ENCODE measurements at regions of chr3 and their contacts with region 1.

Region 1: GRCh38 chr3:38521391-38521987 is 25.3 kb downstream of the EXOG start:
- DNase-seq: no peak
- ATAC-seq: peak; percentile 72
- H3K4me3 Mint-ChIP-seq: no peak overlapping the region
- H3K27ac Mint-ChIP-seq: no peak overlapping the region
- H3K4me1 Mint-ChIP-seq: peaks cover 13% of the 10 kb centered on the region
- H3K27me3 Mint-ChIP-seq: no peaks in the 10 kb centered on the region
- CTCF ChIP-seq: peak; percentile 80

Region 2: DNA sequence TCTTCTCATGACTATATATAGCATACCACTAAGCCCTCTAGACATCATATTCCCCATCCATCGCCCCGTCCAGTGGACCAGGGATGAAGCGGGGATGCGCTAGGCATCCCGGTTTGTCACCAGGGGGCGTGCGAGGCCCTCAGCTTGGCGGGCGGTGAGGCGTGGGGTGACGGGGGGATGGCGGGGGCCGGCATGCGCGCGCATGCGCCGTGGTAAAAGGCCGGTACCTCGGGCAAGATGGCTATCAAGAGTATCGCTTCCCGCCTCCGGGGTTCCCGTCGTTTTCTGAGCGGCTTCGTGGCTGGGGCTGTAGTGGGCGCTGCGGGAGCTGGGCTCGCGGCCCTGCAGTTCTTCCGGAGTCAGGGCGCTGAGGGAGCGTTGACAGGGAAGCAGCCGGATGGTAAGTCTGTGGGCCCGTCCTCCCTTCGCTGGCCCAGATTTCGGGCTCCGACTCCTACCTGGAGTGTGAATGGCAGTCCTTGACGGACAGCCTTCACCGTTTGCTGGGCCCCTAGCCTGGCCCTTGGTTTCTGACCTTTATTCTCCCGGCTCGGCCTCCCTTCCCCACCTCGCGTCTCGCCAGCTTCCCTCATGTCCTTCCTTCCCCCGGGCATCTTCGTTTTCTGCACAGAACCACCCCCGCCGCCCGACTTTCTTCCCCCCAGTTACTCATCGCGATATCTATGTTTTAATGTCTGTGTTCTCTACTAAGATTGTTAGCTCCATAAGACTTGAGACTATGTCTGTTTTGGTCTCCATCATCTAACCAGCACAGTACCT is 25.2 kb before region 1 on chr3 and contains the start of gene EXOG:
- CTCF ChIA-PET with region 1: interaction called, 12 read pairs
- POLR2A ChIA-PET with region 1: no interaction called
- intact Hi-C with region 1: no loop called
- DNase-seq: peak; percentile 88
- ATAC-seq: peak; percentile 96
- H3K4me3 Mint-ChIP-seq: peak within 1 kb of the TSS; percentile 98
- H3K27ac Mint-ChIP-seq: peak within 1 kb of the TSS; percentile 88
- H3K4me1 Mint-ChIP-seq: peaks cover 8% of the 10 kb centered on the region
- H3K27me3 Mint-ChIP-seq: no peaks in the 10 kb centered on the region
- CTCF ChIP-seq: peak; percentile 97
- total RNA-seq, gene EXOG: 26.8 and 32.3 TPM in 2 replicates

Region 3: DNA sequence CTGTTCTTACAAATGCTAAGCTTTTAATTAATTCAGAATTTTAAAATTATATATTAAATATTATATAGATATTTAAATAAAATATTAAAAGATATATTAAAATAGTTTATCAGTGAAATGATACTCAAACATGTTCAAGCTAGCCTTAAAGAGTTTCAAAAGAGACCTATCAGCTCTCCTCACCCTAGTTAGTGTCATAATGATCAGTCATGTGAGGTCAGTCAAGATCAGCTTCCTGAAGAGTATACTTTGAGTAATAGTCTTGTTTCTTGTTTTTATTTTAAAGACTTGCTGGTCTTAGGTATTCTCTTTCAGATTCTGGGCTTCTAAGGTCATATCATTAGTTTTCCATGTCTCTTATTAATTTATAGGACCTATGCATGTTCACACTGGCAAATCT is 10.9 kb before region 1 on chr3:
- CTCF ChIA-PET with region 1: interaction called, 11 read pairs
- POLR2A ChIA-PET with region 1: interaction called, 3 read pairs
- intact Hi-C with region 1: no loop called
- DNase-seq: no peak
- ATAC-seq: no peak
- H3K4me3 Mint-ChIP-seq: no peak overlapping the region
- H3K27ac Mint-ChIP-seq: no peak overlapping the region
- H3K4me1 Mint-ChIP-seq: no peaks in the 10 kb centered on the region
- H3K27me3 Mint-ChIP-seq: no peaks in the 10 kb centered on the region
- CTCF ChIP-seq: no peak

Region 4: GRCh38 chr3:38651154-38651789 is 129.8 kb after region 1 on chr3:
- CTCF ChIA-PET with region 1: interaction called, 7 read pairs
- POLR2A ChIA-PET with region 1: no interaction called
- intact Hi-C with region 1: loop called (anchors 1 kb)
- DNase-seq: peak; percentile 35
- ATAC-seq: peak; percentile 66
- H3K4me3 Mint-ChIP-seq: no peak overlapping the region
- H3K27ac Mint-ChIP-seq: no peak overlapping the region
- H3K4me1 Mint-ChIP-seq: peaks cover 7% of the 10 kb centered on the region
- H3K27me3 Mint-ChIP-seq: peaks cover 20% of the 10 kb centered on the region
- CTCF ChIP-seq: peak; percentile 50

Region 5: DNA sequence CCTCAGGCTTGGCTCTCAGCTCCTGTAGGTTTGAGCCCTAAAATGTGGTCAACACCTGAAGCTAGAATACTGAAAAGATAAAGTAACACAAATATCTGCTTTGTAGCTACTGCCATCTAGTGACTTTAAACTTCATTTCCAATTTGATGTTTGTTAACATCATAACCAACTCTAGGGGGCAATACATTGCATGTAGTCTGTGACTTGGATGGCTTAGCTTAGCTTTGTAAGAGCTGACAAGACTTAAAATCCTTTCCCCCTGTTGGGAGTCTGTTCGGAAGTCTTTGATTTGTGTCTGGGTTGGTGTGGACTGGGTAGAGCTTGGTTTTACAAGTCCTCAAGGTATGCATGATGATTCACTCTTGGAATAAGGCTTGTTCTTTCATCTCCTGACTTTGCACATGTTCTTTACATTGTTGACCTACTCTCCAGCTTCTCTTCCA is 478.5 kb after region 1 on chr3:
- CTCF ChIA-PET with region 1: interaction called, 28 read pairs
- POLR2A ChIA-PET with region 1: no interaction called
- intact Hi-C with region 1: loop called (anchors 1 kb)
- DNase-seq: no peak
- ATAC-seq: no peak
- H3K4me3 Mint-ChIP-seq: no peak overlapping the region
- H3K27ac Mint-ChIP-seq: no peak overlapping the region
- H3K4me1 Mint-ChIP-seq: no peaks in the 10 kb centered on the region
- H3K27me3 Mint-ChIP-seq: peaks cover 13% of the 10 kb centered on the region
- CTCF ChIP-seq: no peak

Region 6: GRCh38 chr3:39025222-39025970 is 503.9 kb after region 1 on chr3:
- CTCF ChIA-PET with region 1: interaction called, 11 read pairs
- POLR2A ChIA-PET with region 1: no interaction called
- intact Hi-C with region 1: loop called (anchors 2 kb)
- DNase-seq: no peak
- ATAC-seq: no peak
- H3K4me3 Mint-ChIP-seq: no peak overlapping the region
- H3K27ac Mint-ChIP-seq: no peak overlapping the region
- H3K4me1 Mint-ChIP-seq: no peaks in the 10 kb centered on the region
- H3K27me3 Mint-ChIP-seq: peaks cover 7% of the 10 kb centered on the region
- CTCF ChIP-seq: no peak